ENCODE measurements at regions of chr10 and their contacts with region 1.

Region 1: DNA sequence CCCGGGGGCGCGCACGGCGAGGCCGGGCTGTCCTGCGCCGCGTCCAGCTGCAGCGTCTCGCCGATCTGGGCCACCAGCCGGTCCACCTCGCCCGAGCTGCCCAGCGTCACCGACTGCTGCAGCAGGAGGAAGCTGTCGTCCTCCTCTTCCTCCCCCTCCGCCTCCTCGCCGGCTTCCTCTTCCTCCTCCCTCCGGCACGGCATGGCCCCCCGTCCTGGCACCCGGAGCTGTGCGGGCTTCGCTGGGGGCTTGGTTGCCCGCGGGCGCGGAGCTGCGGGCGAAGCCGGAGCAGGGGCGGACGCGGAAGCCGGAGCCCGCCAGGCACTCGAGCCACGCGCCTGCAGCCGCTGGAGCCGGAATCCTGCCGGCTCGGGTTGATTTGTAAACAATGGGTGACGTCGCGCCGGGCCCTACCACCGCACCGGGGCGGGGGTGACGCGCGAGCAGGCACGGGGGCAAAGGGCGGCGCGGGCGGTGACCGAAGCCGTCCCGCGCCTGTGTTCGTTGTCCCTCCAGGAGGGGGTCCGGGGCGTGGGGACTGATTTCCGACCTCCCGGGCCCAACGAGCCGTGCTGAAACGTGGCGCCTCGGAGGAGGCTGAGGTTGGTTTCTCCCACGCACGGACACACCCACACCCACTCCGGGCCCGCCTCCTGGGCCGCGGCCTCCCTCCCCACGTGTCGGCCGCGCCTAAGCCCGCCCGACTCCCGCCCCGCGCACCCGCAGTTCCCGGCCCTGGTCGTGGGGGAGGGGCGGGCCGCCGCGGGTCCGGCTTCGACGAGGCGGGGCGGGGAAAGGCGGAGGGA is at the start of gene FRAT2:
- DNase-seq: peak; percentile 96
- H3K4me3 Mint-ChIP-seq: peak within 1 kb of the TSS; percentile 83
- H3K27ac Mint-ChIP-seq: peak within 1 kb of the TSS; percentile 89
- H3K4me1 Mint-ChIP-seq: peaks cover 31% of the 10 kb centered on the region
- H3K27me3 Mint-ChIP-seq: peaks cover 28% of the 10 kb centered on the region
- total RNA-seq, gene FRAT2: 8.7 and 9.8 TPM in 2 replicates

Region 2: DNA sequence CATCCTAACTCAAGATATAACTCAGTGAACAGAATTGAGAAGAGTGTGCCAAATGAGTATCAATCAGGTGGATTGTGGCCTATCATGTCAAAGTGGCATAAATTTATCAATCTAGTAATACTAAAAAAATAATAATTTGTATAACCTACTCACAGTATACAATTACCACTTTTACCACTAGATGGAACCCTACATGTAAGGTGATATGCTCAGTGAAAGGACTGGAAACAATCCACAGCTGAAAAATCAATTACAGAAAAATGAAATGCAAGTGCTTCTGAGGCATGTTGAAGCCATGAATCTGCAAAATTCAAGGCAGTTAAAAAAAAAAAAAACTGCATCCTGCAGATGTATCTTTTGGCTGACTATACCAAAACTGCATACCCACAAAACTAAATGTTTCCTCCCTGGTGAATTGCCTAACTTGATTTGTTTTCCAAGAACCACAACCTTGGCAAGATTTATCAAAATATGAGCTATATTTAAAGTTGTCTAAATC is 56.0 kb before region 1 on chr10:
- intact Hi-C with region 1: loop called (anchors 2 kb)
- DNase-seq: no peak
- H3K4me3 Mint-ChIP-seq: no peak overlapping the region
- H3K27ac Mint-ChIP-seq: no peak overlapping the region
- H3K4me1 Mint-ChIP-seq: peaks cover 20% of the 10 kb centered on the region
- H3K27me3 Mint-ChIP-seq: no peaks in the 10 kb centered on the region

Region 3: DNA sequence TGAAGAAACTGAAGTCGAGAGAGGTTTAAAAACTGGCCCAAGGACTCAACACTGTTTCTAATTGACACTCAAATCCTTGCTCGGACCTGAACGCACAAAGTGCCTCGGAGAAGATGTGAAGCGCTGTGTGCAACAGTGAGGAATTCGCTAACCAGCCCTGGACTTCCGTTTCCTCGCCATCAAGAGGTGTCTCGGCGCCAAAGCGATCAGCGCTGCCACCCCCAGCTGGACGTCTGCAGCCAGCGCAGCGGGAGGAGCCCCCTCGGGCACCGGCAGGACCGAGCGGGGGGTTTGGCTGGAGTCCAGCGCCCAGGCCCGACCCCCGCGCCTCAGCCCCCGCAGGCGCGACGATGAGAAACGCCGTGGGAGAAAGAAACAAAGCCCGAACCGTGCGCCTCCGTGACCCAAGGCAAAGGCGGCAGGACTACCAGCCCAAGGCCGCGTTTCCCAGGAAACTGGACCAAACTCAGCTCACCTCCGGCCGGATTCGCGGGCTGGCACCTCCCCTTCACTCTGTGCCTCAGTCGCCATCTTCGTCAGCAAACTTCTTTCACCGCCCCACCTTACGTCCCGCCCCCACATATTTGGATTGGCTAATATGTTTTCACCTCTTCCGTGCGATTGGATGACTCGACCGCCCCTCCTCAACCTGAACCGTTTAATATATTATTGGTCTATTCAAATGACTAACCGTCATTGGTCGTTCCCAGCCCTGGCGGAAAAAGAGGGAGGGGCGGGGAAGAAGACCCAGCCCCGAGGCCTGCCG is 42.3 kb before region 1 on chr10 and contains the start of gene ARHGAP19:
- intact Hi-C with region 1: loop called (anchors 1 kb)
- DNase-seq: peak; percentile 98
- H3K4me3 Mint-ChIP-seq: peak within 1 kb of the TSS; percentile 88
- H3K27ac Mint-ChIP-seq: peak within 1 kb of the TSS; percentile 87
- H3K4me1 Mint-ChIP-seq: peaks cover 23% of the 10 kb centered on the region
- H3K27me3 Mint-ChIP-seq: no peaks in the 10 kb centered on the region
- total RNA-seq, gene ARHGAP19: 26.4 and 30.7 TPM in 2 replicates

Region 4: GRCh38 chr10:97318772-97319651 is 15.6 kb before region 1 on chr10 and contains the start of gene FRAT1:
- intact Hi-C with region 1: loop called (anchors 1 kb)
- DNase-seq: peak; percentile 97
- H3K4me3 Mint-ChIP-seq: peak within 1 kb of the TSS; percentile 92
- H3K27ac Mint-ChIP-seq: peak within 1 kb of the TSS; percentile 99
- H3K4me1 Mint-ChIP-seq: peaks cover 23% of the 10 kb centered on the region
- H3K27me3 Mint-ChIP-seq: peaks cover 12% of the 10 kb centered on the region
- total RNA-seq, gene FRAT1: 2.0 and 2.5 TPM in 2 replicates

Region 5: GRCh38 chr10:97400665-97401454 is 66.3 kb after region 1 on chr10 and contains the start of gene RRP12:
- intact Hi-C with region 1: loop called (anchors 1 kb)
- DNase-seq: peak; percentile 97
- H3K4me3 Mint-ChIP-seq: peak within 1 kb of the TSS; percentile 97
- H3K27ac Mint-ChIP-seq: peak within 1 kb of the TSS; percentile 94
- H3K4me1 Mint-ChIP-seq: peaks cover 16% of the 10 kb centered on the region
- H3K27me3 Mint-ChIP-seq: no peaks in the 10 kb centered on the region
- total RNA-seq, gene RRP12: 99.4 and 106 TPM in 2 replicates

Region 6: GRCh38 chr10:97640174-97640867 is 305.7 kb after region 1 on chr10 and contains the start of gene PI4K2A:
- intact Hi-C with region 1: loop called (anchors 1 kb)
- DNase-seq: peak; percentile 100
- H3K4me3 Mint-ChIP-seq: peak within 1 kb of the TSS; percentile 95
- H3K27ac Mint-ChIP-seq: peak within 1 kb of the TSS; percentile 90
- H3K4me1 Mint-ChIP-seq: peaks cover 23% of the 10 kb centered on the region
- H3K27me3 Mint-ChIP-seq: peaks cover 3% of the 10 kb centered on the region
- total RNA-seq, gene PI4K2A: 17.8 TPM in 2 replicates

Measured in activated CD4-positive, alpha-beta T cell treated with anti-CD3 and anti-CD28 coated beads, Interleukin-2, amount 10 ng/mL, durations not matched to agents 24 days and 14 days (primary cell).